CD4-positive, alpha-beta memory T cell (primary cell): ENCODE measurements at regions of chr6 and their contacts with region 1.

Region 1: GRCh38 chr6:53651764-53652401 is 13.7 kb downstream of the KLHL31 start:
- DNase-seq: peak; percentile 79 to 83 (median 82)
- H3K4me3 ChIP-seq: peak overlapping the region; percentile 64 to 89
- H3K4me3 Mint-ChIP-seq: peak overlapping the region; percentile 87 to 96 (median 93)
- H3K27ac ChIP-seq: peak overlapping the region; percentile 50
- H3K27ac Mint-ChIP-seq: peak overlapping the region; percentile 79 to 95 (median 94)
- H3K4me1 ChIP-seq: peaks cover 22% of the 10 kb centered on the region
- H3K4me1 Mint-ChIP-seq: peaks cover 16 to 47% (median 27%) of the 10 kb centered on the region in 4 donors
- H3K27me3 ChIP-seq: no peaks in the 10 kb centered on the region
- H3K27me3 Mint-ChIP-seq: no peaks in the 10 kb centered on the region

Region 2: DNA sequence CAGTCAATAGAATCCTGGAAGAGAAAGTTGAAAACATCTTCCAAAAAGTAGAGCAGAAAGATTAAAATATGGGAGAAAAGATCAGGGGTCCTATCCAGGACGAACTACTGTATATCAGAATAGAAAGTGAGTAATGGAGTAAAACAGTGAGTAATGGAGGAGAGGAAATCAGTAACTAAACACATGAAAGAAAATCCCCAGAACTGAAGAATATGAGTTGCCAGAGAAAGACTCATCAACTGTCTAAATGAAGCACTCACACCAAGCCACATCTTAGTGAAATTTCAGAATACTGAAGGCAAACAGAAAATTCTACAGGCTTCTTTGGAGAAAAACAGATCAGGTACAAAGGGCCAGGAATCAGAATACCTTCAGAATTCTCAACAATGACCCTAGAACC is 1450.8 kb before region 1 on chr6:
- CTCF ChIA-PET with region 1: no interaction called
- POLR2A ChIA-PET with region 1: no interaction called
- intact Hi-C with region 1: no loop called
- DNase-seq: no peak
- H3K4me3 ChIP-seq: no peak overlapping the region
- H3K4me3 Mint-ChIP-seq: no peak overlapping the region
- H3K27ac ChIP-seq: no peak overlapping the region
- H3K27ac Mint-ChIP-seq: no peak overlapping the region
- H3K4me1 ChIP-seq: no peaks in the 10 kb centered on the region
- H3K4me1 Mint-ChIP-seq: no peaks in the 10 kb centered on the region
- H3K27me3 ChIP-seq: no peaks in the 10 kb centered on the region
- H3K27me3 Mint-ChIP-seq: peaks cover 0 to 5% of the 10 kb centered on the region in 2 donors

Region 3: GRCh38 chr6:52546678-52547077 is 1105.2 kb before region 1 on chr6:
- CTCF ChIA-PET with region 1: no interaction called
- POLR2A ChIA-PET with region 1: no interaction called
- intact Hi-C with region 1: no loop called
- DNase-seq: no peak
- H3K4me3 ChIP-seq: no peak overlapping the region
- H3K4me3 Mint-ChIP-seq: peak overlapping the region in 1 of 8 donors; percentile 14
- H3K27ac ChIP-seq: no peak overlapping the region
- H3K27ac Mint-ChIP-seq: peak overlapping the region in 2 of 7 donors; percentile 5 to 80
- H3K4me1 ChIP-seq: no peaks in the 10 kb centered on the region
- H3K4me1 Mint-ChIP-seq: peaks cover 12 to 34% (median 29%) of the 10 kb centered on the region in 4 donors
- H3K27me3 ChIP-seq: no peaks in the 10 kb centered on the region
- H3K27me3 Mint-ChIP-seq: no peaks in the 10 kb centered on the region

Region 4: DNA sequence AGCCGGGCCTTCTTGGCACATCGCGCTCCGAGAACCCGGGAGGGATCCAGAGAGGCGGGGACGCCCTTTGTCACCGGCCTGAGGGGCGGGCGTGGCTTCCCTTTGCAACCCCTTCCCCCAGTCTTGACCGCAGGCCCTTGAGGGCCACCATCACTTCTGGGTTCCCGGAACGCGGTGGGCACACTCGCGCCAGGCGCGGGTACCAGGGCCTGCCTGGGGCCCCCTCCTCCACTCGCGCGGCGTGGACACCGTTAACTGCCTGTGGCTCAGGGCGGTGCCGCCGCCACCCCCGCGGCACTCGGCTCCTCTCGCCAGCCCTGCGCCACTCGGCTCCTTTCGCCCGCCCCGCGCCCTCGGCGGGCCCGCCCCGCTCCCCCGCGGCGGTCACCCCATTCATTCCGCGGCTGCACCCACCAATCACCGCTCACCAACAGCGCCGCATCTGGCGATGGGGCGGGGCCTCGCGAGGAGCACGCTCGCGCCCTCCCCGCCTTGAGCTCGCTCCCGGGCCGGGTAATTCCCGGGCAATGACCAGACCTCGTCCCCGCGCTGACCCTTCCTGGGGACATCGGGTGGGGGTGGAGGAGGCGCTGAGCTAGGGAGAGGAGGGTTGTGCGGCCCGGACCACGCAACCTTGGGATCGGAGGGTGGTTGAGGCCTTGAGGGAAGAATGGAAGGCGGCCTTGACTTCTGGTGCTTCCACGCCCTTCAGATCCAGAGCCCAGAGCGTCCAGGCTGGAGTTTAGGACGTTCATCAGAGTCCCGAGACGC is 292.6 kb before region 1 on chr6:
- CTCF ChIA-PET with region 1: no interaction called
- POLR2A ChIA-PET with region 1: no interaction called
- intact Hi-C with region 1: loop called (anchors 5 kb)
- DNase-seq: peak; percentile 85 to 93 (median 92)
- H3K4me3 ChIP-seq: peak overlapping the region; percentile 50 to 74
- H3K4me3 Mint-ChIP-seq: peak overlapping the region; percentile 81 to 96 (median 91)
- H3K27ac ChIP-seq: peak overlapping the region; percentile 99
- H3K27ac Mint-ChIP-seq: peak overlapping the region; percentile 87 to 100 (median 98)
- H3K4me1 ChIP-seq: peaks cover 53% of the 10 kb centered on the region
- H3K4me1 Mint-ChIP-seq: peaks cover 35 to 61% (median 42%) of the 10 kb centered on the region in 4 donors
- H3K27me3 ChIP-seq: no peaks in the 10 kb centered on the region
- H3K27me3 Mint-ChIP-seq: no peaks in the 10 kb centered on the region

Region 5: GRCh38 chr6:53544470-53545308 is 107.2 kb before region 1 on chr6 and contains the start of gene GCLC:
- CTCF ChIA-PET with region 1: interaction called, 38 read pairs
- POLR2A ChIA-PET with region 1: interaction called, 28 read pairs
- intact Hi-C with region 1: loop called (anchors 1 kb)
- DNase-seq: peak; percentile 82 to 85 (median 84)
- H3K4me3 ChIP-seq: peak within 1 kb of the TSS; percentile 61 to 63
- H3K4me3 Mint-ChIP-seq: peak within 1 kb of the TSS; percentile 95 to 99 (median 98)
- H3K27ac ChIP-seq: peak within 1 kb of the TSS; percentile 59
- H3K27ac Mint-ChIP-seq: peak within 1 kb of the TSS; percentile 79 to 96 (median 94)
- H3K4me1 ChIP-seq: peaks cover 51% of the 10 kb centered on the region
- H3K4me1 Mint-ChIP-seq: peaks cover 47 to 73% (median 59%) of the 10 kb centered on the region in 4 donors
- H3K27me3 ChIP-seq: no peaks in the 10 kb centered on the region
- H3K27me3 Mint-ChIP-seq: no peaks in the 10 kb centered on the region
- total RNA-seq, gene GCLC: 39.6 to 40.9 TPM

Region 6: DNA sequence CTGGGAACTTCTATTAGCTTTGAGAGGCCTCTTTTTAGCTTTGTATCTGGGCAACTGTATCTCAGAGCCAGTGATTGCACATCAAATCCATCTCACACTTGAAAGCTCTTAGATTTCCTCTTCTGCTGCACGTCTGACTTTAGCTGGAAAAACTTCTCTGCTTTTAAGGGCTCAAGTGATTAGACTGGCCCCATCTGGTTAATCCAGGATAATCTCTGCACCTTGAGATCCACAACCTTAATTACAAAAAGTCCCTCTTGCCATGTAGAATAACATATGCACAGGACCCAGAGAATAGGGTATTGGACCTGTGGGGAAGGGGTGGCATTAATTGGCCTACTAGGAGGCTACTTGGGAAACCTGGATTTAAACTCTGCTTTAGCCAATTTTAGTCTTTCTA is 10.5 kb before region 1 on chr6:
- CTCF ChIA-PET with region 1: interaction called, 15 read pairs
- POLR2A ChIA-PET with region 1: interaction called, 6 read pairs
- intact Hi-C with region 1: no loop called
- DNase-seq: no peak
- H3K4me3 ChIP-seq: no peak overlapping the region
- H3K4me3 Mint-ChIP-seq: no peak overlapping the region
- H3K27ac ChIP-seq: no peak overlapping the region
- H3K27ac Mint-ChIP-seq: no peak overlapping the region
- H3K4me1 ChIP-seq: peaks cover under 1% of the 10 kb centered on the region
- H3K4me1 Mint-ChIP-seq: peaks cover 1 to 13% (median 3%) of the 10 kb centered on the region in 4 donors
- H3K27me3 ChIP-seq: no peaks in the 10 kb centered on the region
- H3K27me3 Mint-ChIP-seq: peaks cover 0 to 2% of the 10 kb centered on the region in 2 donors

Region 7: GRCh38 chr6:53794720-53795253 is 142.9 kb after region 1 on chr6 and contains the start of gene LRRC1:
- CTCF ChIA-PET with region 1: no interaction called
- POLR2A ChIA-PET with region 1: interaction called, 6 read pairs
- intact Hi-C with region 1: loop called (anchors 5 kb)
- DNase-seq: peak; percentile 79 to 84 (median 84)
- H3K4me3 ChIP-seq: peak within 1 kb of the TSS; percentile 74 to 77
- H3K4me3 Mint-ChIP-seq: peak within 1 kb of the TSS; percentile 94 to 98 (median 97)
- H3K27ac ChIP-seq: peak within 1 kb of the TSS; percentile 41
- H3K27ac Mint-ChIP-seq: peak within 1 kb of the TSS; percentile 81 to 97 (median 91)
- H3K4me1 ChIP-seq: peaks cover 21% of the 10 kb centered on the region
- H3K4me1 Mint-ChIP-seq: peaks cover 14 to 36% (median 28%) of the 10 kb centered on the region in 4 donors
- H3K27me3 ChIP-seq: no peaks in the 10 kb centered on the region
- H3K27me3 Mint-ChIP-seq: peaks cover 2 to 6% of the 10 kb centered on the region in 2 donors
- total RNA-seq, gene LRRC1: 4.6 to 5.2 TPM